Endothelial cell of umbilical vein (primary cell): ENCODE measurements at regions of chr17 and their contacts with region 1.

Region 1: GRCh38 chr17:44363613-44364159 is at the start of gene FAM171A2:
- DNase-seq: peak; percentile 56
- H3K4me3 ChIP-seq: peak within 1 kb of the TSS; percentile 33 to 85 (median 37)
- H3K27ac ChIP-seq: no peak within 1 kb of the TSS
- H3K4me1 ChIP-seq: peaks cover 5% of the 10 kb centered on the region
- H3K27me3 ChIP-seq: peaks cover 6 to 8% of the 10 kb centered on the region in 2 experiments
- CTCF ChIP-seq: peak; percentile 53 to 60
- POLR2A ChIP-seq: peak; percentile 64
- total RNA-seq, gene FAM171A2: 12.0 and 13.4 TPM in 2 replicates

Region 2: GRCh38 chr17:44344939-44345453 is 18.7 kb before region 1 on chr17 and contains the start of gene GRN:
- CTCF ChIA-PET with region 1: interaction called, 39 read pairs
- POLR2A ChIA-PET with region 1: interaction called, 3 read pairs
- dilution Hi-C with region 1: no loop called
- intact Hi-C with region 1: no loop called
- DNase-seq: peak; percentile 99
- H3K4me3 ChIP-seq: peak within 1 kb of the TSS; percentile 31 to 70 (median 62)
- H3K27ac ChIP-seq: peak within 1 kb of the TSS; percentile 4
- H3K4me1 ChIP-seq: no peaks in the 10 kb centered on the region
- H3K27me3 ChIP-seq: peaks cover 0 to 2% of the 10 kb centered on the region in 2 experiments
- CTCF ChIP-seq: no peak
- POLR2A ChIP-seq: peak; percentile 96
- total RNA-seq, gene GRN: 343 and 346 TPM in 2 replicates

Region 3: DNA sequence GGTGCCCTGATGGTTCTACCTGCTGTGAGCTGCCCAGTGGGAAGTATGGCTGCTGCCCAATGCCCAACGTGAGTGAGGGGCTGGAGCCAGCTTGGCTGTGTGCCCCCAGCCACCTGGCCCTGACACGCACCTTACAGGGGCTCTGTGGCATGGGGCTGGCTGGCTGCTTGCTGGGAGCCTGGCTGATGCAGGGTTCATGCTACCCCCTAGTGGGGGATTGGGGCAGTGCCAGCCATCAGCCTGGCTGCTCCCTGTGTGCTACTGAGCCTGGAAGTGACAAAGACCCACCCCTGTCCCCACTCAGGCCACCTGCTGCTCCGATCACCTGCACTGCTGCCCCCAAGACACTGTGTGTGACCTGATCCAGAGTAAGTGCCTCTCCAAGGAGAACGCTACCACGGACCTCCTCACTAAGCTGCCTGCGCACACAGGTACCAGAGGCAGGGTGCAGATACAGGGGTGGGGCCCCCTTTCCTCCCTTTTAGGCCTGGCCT is 12.9 kb before region 1 on chr17:
- CTCF ChIA-PET with region 1: interaction called, 39 read pairs
- POLR2A ChIA-PET with region 1: interaction called, 3 read pairs
- dilution Hi-C with region 1: no loop called
- intact Hi-C with region 1: no loop called
- DNase-seq: peak; percentile 64
- H3K4me3 ChIP-seq: no peak overlapping the region
- H3K27ac ChIP-seq: no peak overlapping the region
- H3K4me1 ChIP-seq: no peaks in the 10 kb centered on the region
- H3K27me3 ChIP-seq: no peaks in the 10 kb centered on the region
- CTCF ChIP-seq: peak; percentile 64 to 95
- POLR2A ChIP-seq: no peak

Region 4: GRCh38 chr17:44376124-44376523 is 12.4 kb after region 1 on chr17:
- CTCF ChIA-PET with region 1: interaction called, 19 read pairs
- POLR2A ChIA-PET with region 1: interaction called, 3 read pairs
- dilution Hi-C with region 1: no loop called
- intact Hi-C with region 1: no loop called
- DNase-seq: peak; percentile 24
- H3K4me3 ChIP-seq: no peak overlapping the region
- H3K27ac ChIP-seq: no peak overlapping the region
- H3K4me1 ChIP-seq: no peaks in the 10 kb centered on the region
- H3K27me3 ChIP-seq: no peaks in the 10 kb centered on the region
- CTCF ChIP-seq: peak; percentile 53 to 66
- POLR2A ChIP-seq: no peak

Region 5: DNA sequence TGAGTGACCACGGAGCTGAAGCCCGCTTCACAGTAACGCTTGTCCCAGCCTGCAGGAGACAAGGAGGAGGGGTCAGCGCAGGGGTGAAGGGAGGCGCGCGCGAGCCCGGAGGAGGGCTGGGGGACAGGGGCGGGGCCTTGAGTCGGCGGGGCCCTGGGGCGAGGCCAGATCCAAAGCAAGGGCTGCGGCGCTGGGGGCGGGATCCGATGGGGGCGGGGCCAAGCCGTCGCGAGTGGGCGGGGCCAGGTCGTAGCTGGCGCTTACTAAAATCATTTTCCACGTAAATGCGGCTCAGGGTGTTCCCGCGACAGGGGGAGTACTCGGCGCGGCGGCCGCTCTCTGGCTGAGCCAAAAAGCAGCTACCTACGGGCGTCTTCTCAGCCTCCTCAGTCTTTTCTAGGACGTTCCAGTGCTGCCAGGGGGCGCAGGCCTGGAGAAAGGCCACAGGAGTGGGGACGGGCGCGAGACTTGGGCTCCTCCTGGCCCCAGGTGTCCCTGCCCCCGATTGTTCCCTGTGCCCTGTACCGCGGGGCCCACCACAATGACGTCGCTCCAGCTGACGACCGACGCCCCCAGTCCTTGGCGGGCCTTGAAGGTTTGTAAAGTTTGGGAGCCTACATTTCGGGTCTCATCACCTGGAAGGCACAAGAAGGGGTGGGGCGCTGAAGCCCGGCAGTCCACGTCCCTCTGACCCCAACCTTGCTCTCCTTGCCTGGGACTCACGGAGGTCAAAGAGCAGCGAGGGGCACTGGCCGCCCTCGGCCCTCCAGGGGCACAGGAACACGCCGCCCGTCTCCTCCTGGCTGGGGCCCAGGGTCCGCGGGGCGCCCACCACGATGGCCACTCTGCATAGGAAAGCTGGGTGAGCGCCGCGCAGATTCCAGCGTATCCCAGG is 21.8 kb after region 1 on chr17:
- CTCF ChIA-PET with region 1: interaction called, 10 read pairs
- POLR2A ChIA-PET with region 1: no interaction called
- dilution Hi-C with region 1: no loop called
- intact Hi-C with region 1: no loop called
- DNase-seq: peak; percentile 79
- H3K4me3 ChIP-seq: peak overlapping the region in 2 of 3 experiments; percentile 37 to 38
- H3K27ac ChIP-seq: no peak overlapping the region
- H3K4me1 ChIP-seq: peaks cover 8% of the 10 kb centered on the region
- H3K27me3 ChIP-seq: peaks cover 13% of the 10 kb centered on the region in 2 experiments
- CTCF ChIP-seq: peak in 1 of 2 donors; percentile 17
- POLR2A ChIP-seq: no peak